Activated B cell treated with CpG ODN at 0.5 μM for 24 hours (primary cell): ENCODE measurements at regions of chr9 and their contacts with region 1.

Region 1: DNA sequence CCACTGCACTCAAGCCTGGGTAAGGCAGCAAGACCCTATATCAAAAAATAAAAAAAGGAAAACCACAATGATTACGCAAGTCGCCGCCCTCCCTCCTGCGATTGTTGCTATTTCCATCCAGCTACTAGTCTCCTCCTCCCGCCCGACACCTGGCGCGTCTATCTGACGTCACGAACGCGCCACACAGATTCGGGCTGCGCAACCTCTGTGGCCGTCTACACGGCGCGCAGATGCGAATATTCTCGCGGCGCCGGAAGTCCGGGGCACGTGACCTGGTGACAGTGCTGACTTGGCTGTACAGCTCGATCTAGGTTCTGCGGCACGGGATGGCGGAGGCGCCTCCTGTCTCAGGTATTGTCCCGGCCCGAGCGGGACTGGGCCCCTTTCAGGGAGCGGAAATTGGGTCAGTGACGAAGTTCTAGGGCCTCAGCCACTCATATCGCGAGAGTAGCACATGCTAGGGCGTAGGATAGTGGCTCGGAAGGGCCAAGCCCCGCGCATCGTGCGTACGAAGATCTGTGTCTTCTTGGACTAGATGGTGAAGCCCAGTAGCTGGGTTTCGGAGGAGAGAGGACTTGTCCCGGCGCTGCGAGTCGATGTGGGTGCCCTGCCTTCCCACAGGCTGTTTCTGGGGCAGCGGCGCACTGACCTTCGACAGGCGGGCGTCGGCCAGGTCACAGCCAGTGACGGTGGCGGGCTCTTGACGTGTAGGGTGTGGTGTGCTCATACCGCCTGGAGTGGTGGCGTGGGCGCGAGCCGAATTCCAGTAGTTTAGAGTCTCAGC is at the start of gene NFX1:
- DNase-seq: peak; percentile 97
- ATAC-seq: peak; percentile 80
- H3K4me3 Mint-ChIP-seq: peak within 1 kb of the TSS; percentile 99
- H3K27ac Mint-ChIP-seq: peak within 1 kb of the TSS; percentile 100
- H3K4me1 Mint-ChIP-seq: peaks cover 62% of the 10 kb centered on the region
- H3K27me3 Mint-ChIP-seq: no peaks in the 10 kb centered on the region
- CTCF ChIP-seq: no peak
- total RNA-seq, gene NFX1: 51.0 and 57.2 TPM in 2 replicates

Region 2: GRCh38 chr9:32278991-32279390 is 1011.4 kb before region 1 on chr9:
- CTCF ChIA-PET with region 1: no interaction called
- POLR2A ChIA-PET with region 1: no interaction called
- intact Hi-C with region 1: no loop called
- DNase-seq: no peak
- ATAC-seq: no peak
- H3K4me3 Mint-ChIP-seq: no peak overlapping the region
- H3K27ac Mint-ChIP-seq: no peak overlapping the region
- H3K4me1 Mint-ChIP-seq: no peaks in the 10 kb centered on the region
- H3K27me3 Mint-ChIP-seq: no peaks in the 10 kb centered on the region
- CTCF ChIP-seq: no peak

Region 3: GRCh38 chr9:33076358-33077004 is 214.0 kb before region 1 on chr9 and contains the start of gene SMU1:
- CTCF ChIA-PET with region 1: no interaction called
- POLR2A ChIA-PET with region 1: interaction called, 3 read pairs
- intact Hi-C with region 1: loop called (anchors 1 kb)
- DNase-seq: peak; percentile 86
- ATAC-seq: peak; percentile 98
- H3K4me3 Mint-ChIP-seq: peak within 1 kb of the TSS; percentile 98
- H3K27ac Mint-ChIP-seq: peak within 1 kb of the TSS; percentile 99
- H3K4me1 Mint-ChIP-seq: peaks cover 26% of the 10 kb centered on the region
- H3K27me3 Mint-ChIP-seq: no peaks in the 10 kb centered on the region
- CTCF ChIP-seq: no peak
- total RNA-seq, gene SMU1: 26.8 and 28.1 TPM in 2 replicates

Region 4: GRCh38 chr9:33329117-33329563 is 38.7 kb after region 1 on chr9:
- CTCF ChIA-PET with region 1: interaction called, 3 read pairs
- POLR2A ChIA-PET with region 1: interaction called, 9 read pairs
- intact Hi-C with region 1: loop called (anchors 5 kb)
- DNase-seq: no peak
- ATAC-seq: no peak
- H3K4me3 Mint-ChIP-seq: no peak overlapping the region
- H3K27ac Mint-ChIP-seq: no peak overlapping the region
- H3K4me1 Mint-ChIP-seq: no peaks in the 10 kb centered on the region
- H3K27me3 Mint-ChIP-seq: no peaks in the 10 kb centered on the region
- CTCF ChIP-seq: no peak

Region 5: GRCh38 chr9:33404788-33405362 is 114.4 kb after region 1 on chr9:
- CTCF ChIA-PET with region 1: no interaction called
- POLR2A ChIA-PET with region 1: no interaction called
- intact Hi-C with region 1: no loop called
- DNase-seq: no peak
- ATAC-seq: no peak
- H3K4me3 Mint-ChIP-seq: no peak overlapping the region
- H3K27ac Mint-ChIP-seq: no peak overlapping the region
- H3K4me1 Mint-ChIP-seq: no peaks in the 10 kb centered on the region
- H3K27me3 Mint-ChIP-seq: peaks cover 2% of the 10 kb centered on the region
- CTCF ChIP-seq: no peak

Region 6: DNA sequence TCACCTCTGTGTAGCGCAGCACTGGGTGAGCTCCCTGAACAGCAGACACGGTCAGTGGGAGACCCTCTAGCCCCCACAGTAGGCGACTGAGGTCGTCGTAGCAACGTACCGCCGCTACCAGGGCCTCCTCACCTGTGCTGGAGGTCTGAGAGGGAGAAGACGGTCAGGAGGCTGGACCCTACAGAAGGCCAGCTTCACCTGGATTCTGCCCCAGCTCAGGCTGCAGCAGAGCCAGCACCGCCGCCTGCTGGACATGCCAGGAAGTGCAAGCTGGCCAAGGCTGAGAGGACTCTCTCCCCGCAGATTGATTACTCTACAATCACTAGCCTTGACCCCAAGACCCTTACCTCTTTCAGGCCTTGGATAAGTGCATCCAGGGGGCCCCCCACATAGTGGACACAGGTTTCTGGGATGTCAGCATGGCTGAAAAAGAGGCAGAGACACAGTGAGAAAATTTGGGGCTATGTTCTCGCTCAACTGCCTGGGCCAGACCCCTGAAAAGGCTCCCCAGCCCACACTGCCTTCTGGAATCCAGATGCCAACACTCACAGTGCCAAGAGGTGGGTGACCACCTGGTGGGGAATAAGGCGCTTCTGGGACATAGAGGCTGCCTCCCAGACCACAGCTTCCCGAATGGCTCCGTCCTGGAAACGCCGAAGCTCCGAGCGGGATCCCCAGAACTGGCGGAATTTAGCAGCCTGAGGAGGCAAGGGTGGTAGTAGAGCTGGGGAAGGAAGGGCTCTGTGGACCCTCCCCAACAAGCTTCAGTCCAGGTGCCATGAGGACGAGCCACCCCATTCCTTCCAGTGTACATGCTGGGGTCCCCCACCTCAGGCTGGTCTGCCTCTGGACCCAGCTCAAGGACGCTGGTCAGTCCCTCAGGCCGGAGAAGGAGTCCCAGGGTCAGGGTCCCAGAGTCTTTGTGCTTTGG is 176.4 kb after region 1 on chr9:
- CTCF ChIA-PET with region 1: interaction called, 17 read pairs
- POLR2A ChIA-PET with region 1: interaction called, 5 read pairs
- intact Hi-C with region 1: loop called (anchors 1 kb)
- DNase-seq: peak; percentile 61
- ATAC-seq: peak; percentile 83
- H3K4me3 Mint-ChIP-seq: no peak overlapping the region
- H3K27ac Mint-ChIP-seq: no peak overlapping the region
- H3K4me1 Mint-ChIP-seq: peaks cover 6% of the 10 kb centered on the region
- H3K27me3 Mint-ChIP-seq: no peaks in the 10 kb centered on the region
- CTCF ChIP-seq: peak; percentile 48

Region 7: GRCh38 chr9:33952066-33952465 is 661.6 kb after region 1 on chr9:
- CTCF ChIA-PET with region 1: no interaction called
- POLR2A ChIA-PET with region 1: no interaction called
- intact Hi-C with region 1: no loop called
- DNase-seq: no peak
- ATAC-seq: no peak
- H3K4me3 Mint-ChIP-seq: no peak overlapping the region
- H3K27ac Mint-ChIP-seq: no peak overlapping the region
- H3K4me1 Mint-ChIP-seq: no peaks in the 10 kb centered on the region
- H3K27me3 Mint-ChIP-seq: no peaks in the 10 kb centered on the region
- CTCF ChIP-seq: no peak

Region 8: GRCh38 chr9:34048923-34049697 is 758.7 kb after region 1 on chr9:
- CTCF ChIA-PET with region 1: no interaction called
- POLR2A ChIA-PET with region 1: no interaction called
- intact Hi-C with region 1: loop called (anchors 2 kb)
- DNase-seq: peak; percentile 97
- ATAC-seq: peak; percentile 80
- H3K4me3 Mint-ChIP-seq: peak overlapping the region; percentile 99
- H3K27ac Mint-ChIP-seq: peak overlapping the region; percentile 100
- H3K4me1 Mint-ChIP-seq: peaks cover 25% of the 10 kb centered on the region
- H3K27me3 Mint-ChIP-seq: no peaks in the 10 kb centered on the region
- CTCF ChIP-seq: no peak